ENCODE measurements at regions of chr5 and their contacts with region 1.

Region 1: GRCh38 chr5:102654559-102655349 is 100.4 kb upstream of the PAM start:
- DNase-seq: no peak
- H3K4me3 ChIP-seq: no peak overlapping the region
- H3K27ac ChIP-seq: no peak overlapping the region
- H3K4me1 ChIP-seq: no peaks in the 10 kb centered on the region
- H3K27me3 ChIP-seq: no peaks in the 10 kb centered on the region
- CTCF ChIP-seq: no peak
- EP300 ChIP-seq: no peak
- POLR2A ChIP-seq: no peak

Region 2: DNA sequence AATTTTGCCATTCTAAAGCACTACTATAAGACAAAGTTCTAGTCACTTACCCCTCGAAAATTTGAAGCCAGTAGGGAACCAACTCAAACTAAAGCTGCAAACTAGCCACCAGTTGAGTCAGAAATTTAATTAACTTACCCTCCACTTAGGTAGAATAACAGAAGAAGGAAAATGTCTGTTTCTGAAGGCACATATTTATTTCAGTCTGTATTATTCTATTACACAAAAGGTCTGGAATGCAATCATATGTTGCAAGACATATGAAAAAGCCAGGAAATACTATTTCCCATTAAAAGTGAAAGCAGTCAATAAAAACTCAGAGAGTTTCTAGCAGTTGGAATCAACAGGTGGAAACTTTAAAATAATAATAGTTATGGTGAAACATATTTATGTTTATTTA is 279.5 kb before region 1 on chr5:
- intact Hi-C with region 1: no loop called
- DNase-seq: no peak
- H3K4me3 ChIP-seq: no peak overlapping the region
- H3K27ac ChIP-seq: no peak overlapping the region
- H3K4me1 ChIP-seq: no peaks in the 10 kb centered on the region
- H3K27me3 ChIP-seq: no peaks in the 10 kb centered on the region
- CTCF ChIP-seq: no peak
- EP300 ChIP-seq: no peak
- POLR2A ChIP-seq: no peak

Region 3: GRCh38 chr5:103657301-103657700 is 1002.5 kb after region 1 on chr5:
- intact Hi-C with region 1: loop called (anchors 10 kb)
- DNase-seq: no peak
- H3K4me3 ChIP-seq: no peak overlapping the region
- H3K27ac ChIP-seq: no peak overlapping the region
- H3K4me1 ChIP-seq: no peaks in the 10 kb centered on the region
- H3K27me3 ChIP-seq: no peaks in the 10 kb centered on the region
- CTCF ChIP-seq: no peak
- EP300 ChIP-seq: no peak
- POLR2A ChIP-seq: no peak

Measured in stomach (tissue), 19 donors.